MCF 10A (cell line): ENCODE measurements at regions of chr1 and their contacts with region 1.

Region 1: GRCh38 chr1:43763497-43763973 is 56.2 kb downstream of the ST3GAL3 start:
- DNase-seq: peak; percentile 91
- H3K4me3 Mint-ChIP-seq: no peak overlapping the region
- H3K27ac Mint-ChIP-seq: peak overlapping the region; percentile 57
- H3K4me1 Mint-ChIP-seq: peaks cover 12% of the 10 kb centered on the region
- H3K27me3 Mint-ChIP-seq: no peaks in the 10 kb centered on the region
- CTCF ChIP-seq: peak; percentile 85

Region 2: GRCh38 chr1:43529206-43529731 is 234.3 kb before region 1 on chr1:
- CTCF ChIA-PET with region 1: interaction called, 3 read pairs
- POLR2A ChIA-PET with region 1: interaction called, 8 read pairs
- intact Hi-C with region 1: loop called (anchors 1 kb)
- DNase-seq: peak; percentile 93
- H3K4me3 Mint-ChIP-seq: no peak overlapping the region
- H3K27ac Mint-ChIP-seq: no peak overlapping the region
- H3K4me1 Mint-ChIP-seq: peaks cover 48% of the 10 kb centered on the region
- H3K27me3 Mint-ChIP-seq: no peaks in the 10 kb centered on the region
- CTCF ChIP-seq: peak; percentile 84

Region 3: GRCh38 chr1:43611950-43612349 is 151.6 kb before region 1 on chr1:
- CTCF ChIA-PET with region 1: no interaction called
- POLR2A ChIA-PET with region 1: no interaction called
- intact Hi-C with region 1: no loop called
- DNase-seq: no peak
- H3K4me3 Mint-ChIP-seq: no peak overlapping the region
- H3K27ac Mint-ChIP-seq: no peak overlapping the region
- H3K4me1 Mint-ChIP-seq: no peaks in the 10 kb centered on the region
- H3K27me3 Mint-ChIP-seq: no peaks in the 10 kb centered on the region
- CTCF ChIP-seq: no peak

Region 4: DNA sequence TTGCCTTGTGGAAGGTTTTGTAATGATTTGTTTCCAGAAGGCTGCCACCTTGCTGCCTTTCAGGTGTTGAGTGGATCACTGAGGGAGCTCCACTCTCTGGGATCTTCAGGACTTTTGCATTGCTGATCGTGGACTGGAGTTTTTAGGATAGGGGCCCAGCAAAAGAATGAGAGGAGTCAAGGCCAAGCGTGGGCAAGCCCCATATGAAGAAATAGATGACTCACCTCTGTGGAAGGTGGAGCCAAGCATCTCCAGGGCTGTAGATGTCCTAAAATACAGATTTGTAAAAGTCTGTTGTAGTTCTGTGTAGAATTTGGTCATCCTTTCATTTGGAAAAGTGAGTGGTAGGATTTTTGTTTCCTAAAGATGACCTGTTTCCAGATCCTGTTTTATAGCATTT is 10.8 kb after region 1 on chr1:
- CTCF ChIA-PET with region 1: interaction called, 17 read pairs
- POLR2A ChIA-PET with region 1: interaction called, 5 read pairs
- intact Hi-C with region 1: no loop called
- DNase-seq: peak; percentile 86
- H3K4me3 Mint-ChIP-seq: no peak overlapping the region
- H3K27ac Mint-ChIP-seq: peak overlapping the region; percentile 69
- H3K4me1 Mint-ChIP-seq: peaks cover 18% of the 10 kb centered on the region
- H3K27me3 Mint-ChIP-seq: no peaks in the 10 kb centered on the region
- CTCF ChIP-seq: no peak

Region 5: DNA sequence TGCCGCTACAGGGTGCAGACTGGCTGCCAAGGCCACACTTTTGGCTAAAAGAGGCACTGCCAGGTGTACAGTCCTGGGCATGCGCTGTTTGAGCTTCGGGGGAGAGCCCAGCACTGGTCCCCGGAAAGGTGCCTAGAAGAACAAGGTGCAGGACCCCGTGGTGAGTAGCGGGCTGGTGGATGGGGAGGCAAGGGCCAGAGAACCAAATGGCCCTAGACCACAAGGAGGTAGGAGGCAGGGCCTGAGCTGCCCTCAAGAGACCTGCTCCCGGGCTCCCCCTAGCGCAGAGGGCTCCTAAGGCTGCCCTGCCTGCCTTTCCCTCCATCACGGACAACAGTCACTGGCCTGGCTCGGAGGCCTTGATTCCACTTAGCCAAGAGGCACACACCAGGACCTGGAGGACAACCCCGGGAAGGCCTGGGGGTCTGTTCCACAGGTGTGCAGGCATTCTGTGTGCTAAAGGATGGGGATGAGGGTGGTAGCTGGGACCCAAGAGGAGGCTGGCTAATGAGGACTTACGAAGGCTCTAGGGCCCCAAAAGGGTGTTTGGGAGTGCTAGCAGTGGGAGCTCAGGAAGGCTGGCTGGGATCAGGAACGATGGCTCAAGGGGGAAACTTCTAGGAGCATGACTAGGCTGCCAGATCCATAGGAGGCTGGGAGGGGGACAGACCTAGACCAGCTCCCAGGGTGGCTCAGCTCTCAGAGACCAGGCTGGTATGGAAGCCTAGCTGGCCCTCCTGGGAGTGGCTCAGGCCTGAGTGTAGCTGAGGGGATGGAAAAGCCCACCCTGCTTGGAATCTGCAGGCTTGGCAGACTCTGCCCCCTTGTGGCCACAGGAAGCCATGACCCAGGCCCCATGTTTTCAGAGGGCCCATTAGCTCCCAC is 170.8 kb after region 1 on chr1:
- CTCF ChIA-PET with region 1: interaction called, 369 read pairs
- POLR2A ChIA-PET with region 1: interaction called, 34 read pairs
- intact Hi-C with region 1: loop called (anchors 1 kb)
- DNase-seq: peak; percentile 68
- H3K4me3 Mint-ChIP-seq: peak overlapping the region; percentile 34
- H3K27ac Mint-ChIP-seq: no peak overlapping the region
- H3K4me1 Mint-ChIP-seq: peaks cover 34% of the 10 kb centered on the region
- H3K27me3 Mint-ChIP-seq: no peaks in the 10 kb centered on the region
- CTCF ChIP-seq: peak; percentile 92

Region 6: GRCh38 chr1:43979528-43980254 is 216.2 kb after region 1 on chr1:
- CTCF ChIA-PET with region 1: interaction called, 3 read pairs
- POLR2A ChIA-PET with region 1: interaction called, 5 read pairs
- intact Hi-C with region 1: loop called (anchors 2 kb)
- DNase-seq: peak; percentile 51
- H3K4me3 Mint-ChIP-seq: peak overlapping the region; percentile 63
- H3K27ac Mint-ChIP-seq: no peak overlapping the region
- H3K4me1 Mint-ChIP-seq: peaks cover 55% of the 10 kb centered on the region
- H3K27me3 Mint-ChIP-seq: no peaks in the 10 kb centered on the region
- CTCF ChIP-seq: no peak

Region 7: DNA sequence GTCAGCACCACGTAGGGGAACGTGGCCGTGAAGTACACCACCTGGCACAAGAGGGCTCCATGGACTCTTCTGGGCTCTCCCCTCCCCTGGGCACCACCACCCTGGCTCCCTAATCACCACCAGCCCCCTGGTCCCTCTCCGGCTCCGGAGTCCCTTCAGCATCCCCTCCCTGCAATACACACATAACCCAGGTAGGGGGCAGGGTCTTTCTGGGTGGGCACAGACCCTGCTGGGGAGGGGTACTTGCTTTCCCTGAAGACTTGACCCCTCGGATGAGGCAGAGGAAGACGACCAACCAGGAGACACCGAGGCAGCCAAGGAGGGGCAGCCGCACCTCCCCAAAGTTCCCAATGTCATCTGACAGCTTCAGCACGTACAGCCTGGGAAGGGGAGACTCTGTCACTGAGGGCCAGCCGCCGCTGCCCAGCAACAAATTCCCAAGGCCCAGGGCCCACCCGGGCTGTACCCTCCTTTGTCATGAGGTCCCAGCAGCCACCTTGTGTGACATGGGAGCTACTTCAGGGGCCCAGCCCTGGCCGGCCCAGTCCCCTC is 239.1 kb after region 1 on chr1:
- CTCF ChIA-PET with region 1: interaction called, 18 read pairs
- POLR2A ChIA-PET with region 1: interaction called, 3 read pairs
- intact Hi-C with region 1: no loop called
- DNase-seq: no peak
- H3K4me3 Mint-ChIP-seq: no peak overlapping the region
- H3K27ac Mint-ChIP-seq: no peak overlapping the region
- H3K4me1 Mint-ChIP-seq: no peaks in the 10 kb centered on the region
- H3K27me3 Mint-ChIP-seq: no peaks in the 10 kb centered on the region
- CTCF ChIP-seq: peak; percentile 32

Region 8: DNA sequence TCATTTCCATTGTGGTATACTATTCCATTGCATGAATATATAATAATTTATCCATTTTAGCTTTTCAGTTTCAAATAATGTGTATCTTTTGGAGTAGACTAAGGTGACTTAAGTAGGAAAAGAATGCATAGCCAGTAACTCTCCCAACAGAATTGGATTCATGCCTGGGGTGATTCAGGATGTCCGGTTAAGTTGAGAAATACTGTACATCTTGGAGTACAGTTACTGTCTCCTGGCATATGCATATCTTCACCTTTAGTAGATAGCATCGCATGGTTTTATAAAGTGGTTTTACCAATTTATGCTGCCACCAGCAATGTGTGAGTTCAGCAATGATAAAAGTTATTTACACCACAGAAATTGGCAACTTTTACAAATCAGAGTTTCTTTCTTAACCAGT is 286.3 kb after region 1 on chr1:
- CTCF ChIA-PET with region 1: interaction called, 14 read pairs
- POLR2A ChIA-PET with region 1: no interaction called
- intact Hi-C with region 1: loop called (anchors 1 kb)
- DNase-seq: peak; percentile 92
- H3K4me3 Mint-ChIP-seq: no peak overlapping the region
- H3K27ac Mint-ChIP-seq: no peak overlapping the region
- H3K4me1 Mint-ChIP-seq: peaks cover 33% of the 10 kb centered on the region
- H3K27me3 Mint-ChIP-seq: no peaks in the 10 kb centered on the region
- CTCF ChIP-seq: no peak